Calu3 (cell line): ENCODE measurements at regions of chr12 and their contacts with region 1.

Region 1: GRCh38 chr12:95004610-95005009 is 1.1 kb upstream of the NDUFA12 start:
- DNase-seq: no peak
- H3K4me3 Mint-ChIP-seq: peak overlapping the region; percentile 2
- H3K27ac Mint-ChIP-seq: peak overlapping the region; percentile 86
- H3K4me1 Mint-ChIP-seq: peaks cover 13% of the 10 kb centered on the region
- H3K27me3 Mint-ChIP-seq: no peaks in the 10 kb centered on the region
- CTCF ChIP-seq: no peak

Region 2: DNA sequence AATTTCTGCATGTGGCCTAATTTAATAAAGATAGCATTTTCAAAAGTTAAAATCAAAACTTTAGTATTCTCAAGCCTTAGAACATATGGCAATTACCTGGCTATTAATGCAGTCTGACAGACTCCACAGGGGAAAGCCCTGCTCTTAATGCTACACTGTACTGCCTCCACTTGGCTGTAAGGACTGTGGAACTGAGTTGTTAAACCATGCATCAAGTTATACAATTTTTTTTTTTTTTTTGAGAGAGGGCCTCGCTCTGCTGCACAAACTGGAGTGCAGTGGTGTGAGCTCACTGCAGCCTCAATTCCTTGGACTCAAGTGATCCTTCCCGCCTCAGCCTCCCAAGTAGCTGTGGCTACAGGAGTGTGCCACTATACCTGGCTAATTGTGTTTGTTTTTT is 17.9 kb after region 1 on chr12:
- CTCF ChIA-PET with region 1: interaction called, 10 read pairs
- intact Hi-C with region 1: no loop called
- DNase-seq: no peak
- H3K4me3 Mint-ChIP-seq: no peak overlapping the region
- H3K27ac Mint-ChIP-seq: no peak overlapping the region
- H3K4me1 Mint-ChIP-seq: no peaks in the 10 kb centered on the region
- H3K27me3 Mint-ChIP-seq: no peaks in the 10 kb centered on the region
- CTCF ChIP-seq: no peak